Transverse colon (tissue), 4 donors: ENCODE measurements at regions of chr16 and their contacts with region 1.

Region 1: GRCh38 chr16:69754469-69755310 is at the start of gene NOB1:
- DNase-seq: peak; percentile 97
- H3K4me3 ChIP-seq: peak within 1 kb of the TSS; percentile 49 to 74 (median 60)
- H3K27ac ChIP-seq: peak within 1 kb of the TSS; percentile 60 to 83 (median 80)
- H3K4me1 ChIP-seq: peaks cover 0 to 20% (median 15%) of the 10 kb centered on the region in 4 donors
- H3K27me3 ChIP-seq: no peaks in the 10 kb centered on the region
- CTCF ChIP-seq: peak; percentile 89 to 100 (median 98)
- EP300 ChIP-seq: no peak
- POLR2A ChIP-seq: peak; percentile 64
- total RNA-seq, gene NOB1: 21.2 to 60.2 (median 34.0) TPM

Region 2: DNA sequence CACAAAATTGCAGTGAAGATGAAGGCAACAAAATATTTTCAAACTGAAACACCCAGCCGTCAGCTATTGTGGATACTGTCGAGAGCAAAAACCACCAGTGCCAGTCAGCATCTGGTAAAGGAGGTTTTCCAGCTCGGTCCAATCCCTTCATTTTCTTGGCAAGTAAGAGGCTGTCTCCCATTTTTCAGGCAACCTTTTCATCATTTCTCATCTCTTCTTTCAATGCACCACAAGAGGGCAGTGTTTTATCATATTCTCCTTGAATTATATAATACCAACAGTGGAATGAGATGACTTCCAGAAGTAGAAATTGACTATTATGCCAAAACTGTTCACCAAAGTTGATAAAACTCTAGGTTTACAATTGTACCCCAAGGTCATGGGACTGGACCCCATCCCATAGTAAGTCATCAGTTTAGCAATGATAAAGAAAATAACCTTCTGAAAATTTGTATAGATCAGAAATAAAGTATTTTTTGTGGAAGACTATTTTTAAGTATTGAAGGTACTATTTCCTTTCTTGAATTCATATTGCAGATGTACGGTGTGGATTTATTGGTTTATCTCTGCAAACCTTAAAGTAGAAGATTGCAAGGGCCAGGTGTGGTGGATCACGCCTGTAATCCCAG is 45.1 kb before region 1 on chr16:
- in situ Hi-C with region 1: loop called in 2 of 4 experiments (anchors 10 kb)
- intact Hi-C with region 1: no loop called
- DNase-seq: no peak
- H3K4me3 ChIP-seq: no peak overlapping the region
- H3K27ac ChIP-seq: peak overlapping the region in 3 of 4 donors; percentile 25 to 56 (median 37)
- H3K4me1 ChIP-seq: peaks cover 0 to 38% (median 12%) of the 10 kb centered on the region in 4 donors
- H3K27me3 ChIP-seq: no peaks in the 10 kb centered on the region
- CTCF ChIP-seq: peak; percentile 71 to 88 (median 73)
- EP300 ChIP-seq: no peak
- POLR2A ChIP-seq: no peak